Posterior cingulate gyrus (tissue), 11 donors: ENCODE measurements at regions of chr6 and their contacts with region 1.

Region 1: DNA sequence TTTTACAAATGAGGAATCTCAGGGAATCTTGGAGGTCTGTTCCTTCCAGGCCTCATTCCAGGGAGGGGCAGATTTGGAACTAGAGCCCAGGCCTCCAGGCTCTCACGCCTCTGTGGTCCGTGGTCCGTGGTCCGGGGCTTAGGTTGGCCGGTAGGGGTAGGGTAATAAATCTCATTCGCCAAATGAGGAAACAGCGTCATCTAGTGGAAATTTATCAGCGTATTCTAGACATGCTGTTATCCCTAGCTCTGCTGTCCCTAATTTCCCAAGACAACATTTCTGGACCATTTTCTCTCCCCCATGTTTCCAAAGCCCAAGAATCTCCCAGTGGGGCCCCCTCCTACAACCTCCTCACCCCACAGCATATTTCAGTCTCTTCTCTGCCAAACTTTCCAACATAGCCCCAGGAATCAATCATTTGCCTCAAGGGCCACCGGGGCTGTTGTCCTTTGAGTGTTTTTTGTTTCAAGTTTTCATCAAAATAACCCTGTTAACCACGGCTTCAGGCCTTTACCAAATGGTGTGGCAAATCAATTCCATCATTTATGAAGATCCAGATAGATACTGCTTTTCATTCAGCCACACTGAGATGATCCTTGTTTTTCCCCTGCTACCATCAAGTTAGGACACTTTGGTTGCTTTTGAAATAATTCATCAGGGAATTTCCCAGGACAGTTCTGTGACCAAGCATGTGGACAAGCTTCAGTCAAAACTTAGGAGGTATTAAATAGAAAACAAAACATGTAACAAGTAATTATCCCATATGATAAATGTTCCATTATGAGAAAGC is 126.8 kb downstream of the ALDH8A1 start:
- DNase-seq: peak in 6 of 10 donors; percentile 19 to 81 (median 40)

Region 2: DNA sequence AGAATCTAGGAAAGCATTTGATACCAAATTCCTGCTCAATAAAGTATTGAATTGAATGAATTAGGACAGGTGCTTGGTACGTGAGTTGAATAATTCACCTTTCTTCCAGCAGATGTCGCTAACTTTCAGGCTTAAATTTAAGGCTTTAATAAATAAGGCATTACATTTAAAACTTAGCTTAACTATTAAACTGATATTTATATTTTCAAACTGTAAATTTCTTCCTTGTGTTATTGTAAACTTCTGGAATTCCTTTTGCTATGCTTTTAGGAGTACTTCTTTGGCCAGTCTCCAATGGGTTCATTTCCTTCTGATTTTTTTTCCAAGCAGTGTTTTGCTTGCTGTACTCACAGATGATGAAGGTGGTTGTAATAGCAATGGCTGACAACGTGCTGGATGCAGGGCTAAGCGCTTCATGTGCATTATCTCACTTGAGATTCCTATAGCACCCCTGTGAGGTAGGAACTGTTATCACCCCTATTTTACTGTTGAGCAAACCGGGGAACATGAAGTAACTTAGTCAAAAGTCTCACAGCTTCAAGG is 699.4 kb before region 1 on chr6:
- intact Hi-C with region 1: loop called (anchors 5 kb)
- DNase-seq: no peak

Region 3: GRCh38 chr6:134161036-134161435 is 662.1 kb before region 1 on chr6:
- intact Hi-C with region 1: loop called (anchors 1 kb)
- DNase-seq: no peak

Region 4: DNA sequence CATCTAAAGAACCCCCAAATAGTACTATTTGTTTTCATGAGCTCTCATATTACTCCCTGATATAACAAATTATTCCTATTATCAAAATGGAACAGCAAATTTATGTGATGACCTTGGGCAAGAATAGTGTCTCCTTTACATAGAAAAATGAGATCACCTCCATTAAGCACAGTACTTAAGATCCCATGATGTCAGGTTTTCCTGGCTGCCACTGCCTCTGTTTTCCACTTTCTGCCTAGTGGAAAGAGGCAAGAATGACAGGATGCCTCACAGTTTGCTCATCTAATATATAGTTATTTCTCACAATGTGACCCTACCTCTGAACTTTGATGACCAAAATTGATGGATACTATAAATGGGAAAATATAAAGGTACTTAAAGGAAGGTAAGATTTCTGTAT is 245.1 kb before region 1 on chr6:
- intact Hi-C with region 1: loop called (anchors 10 kb)
- DNase-seq: no peak

Region 5: GRCh38 chr6:134882426-134883038 is 59.4 kb after region 1 on chr6:
- intact Hi-C with region 1: loop called (anchors 5 kb)
- DNase-seq: peak; percentile 59 to 95 (median 77)